Mammary epithelial cell (primary cell): ENCODE measurements at regions of chr1 and their contacts with region 1.

Region 1: GRCh38 chr1:31789259-31790065 is 25.3 kb upstream of the ADGRB2 start:
- DNase-seq: peak; percentile 75
- H3K4me3 ChIP-seq: peak overlapping the region; percentile 52 to 66 (median 60)
- H3K27ac ChIP-seq: no peak overlapping the region
- H3K4me1 ChIP-seq: peaks cover 13% of the 10 kb centered on the region
- H3K27me3 ChIP-seq: no peaks in the 10 kb centered on the region
- CTCF ChIP-seq: peak; percentile 79 to 98

Region 2: DNA sequence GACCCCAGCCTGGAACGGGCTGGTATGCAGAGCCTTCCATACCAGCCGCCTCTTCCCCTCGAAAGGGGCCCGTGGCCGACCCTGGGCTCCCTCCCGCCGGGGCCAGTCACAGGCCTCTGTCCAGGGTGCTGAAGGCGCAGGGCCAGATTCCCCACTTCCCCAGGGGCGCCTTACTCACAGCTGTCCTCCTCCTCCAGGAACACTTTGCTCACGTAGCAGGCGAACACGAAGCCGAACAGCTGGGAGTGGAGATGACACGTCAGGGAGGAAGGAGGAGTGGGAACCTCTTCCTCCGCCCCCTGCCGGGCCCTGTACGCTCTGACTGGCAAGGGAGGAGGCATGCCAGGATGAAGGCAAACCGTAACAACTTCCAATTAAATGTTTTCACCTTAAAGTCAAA is 607.1 kb before region 1 on chr1:
- CTCF ChIA-PET with region 1: interaction called, 7 read pairs
- dilution Hi-C with region 1: no loop called
- in situ Hi-C with region 1: no loop called
- intact Hi-C with region 1: loop called (anchors 2 kb)
- DNase-seq: peak; percentile 96
- H3K4me3 ChIP-seq: peak overlapping the region in 1 of 3 experiments; percentile 31
- H3K27ac ChIP-seq: no peak overlapping the region
- H3K4me1 ChIP-seq: peaks cover 13% of the 10 kb centered on the region
- H3K27me3 ChIP-seq: no peaks in the 10 kb centered on the region
- CTCF ChIP-seq: peak; percentile 16 to 57

Region 3: DNA sequence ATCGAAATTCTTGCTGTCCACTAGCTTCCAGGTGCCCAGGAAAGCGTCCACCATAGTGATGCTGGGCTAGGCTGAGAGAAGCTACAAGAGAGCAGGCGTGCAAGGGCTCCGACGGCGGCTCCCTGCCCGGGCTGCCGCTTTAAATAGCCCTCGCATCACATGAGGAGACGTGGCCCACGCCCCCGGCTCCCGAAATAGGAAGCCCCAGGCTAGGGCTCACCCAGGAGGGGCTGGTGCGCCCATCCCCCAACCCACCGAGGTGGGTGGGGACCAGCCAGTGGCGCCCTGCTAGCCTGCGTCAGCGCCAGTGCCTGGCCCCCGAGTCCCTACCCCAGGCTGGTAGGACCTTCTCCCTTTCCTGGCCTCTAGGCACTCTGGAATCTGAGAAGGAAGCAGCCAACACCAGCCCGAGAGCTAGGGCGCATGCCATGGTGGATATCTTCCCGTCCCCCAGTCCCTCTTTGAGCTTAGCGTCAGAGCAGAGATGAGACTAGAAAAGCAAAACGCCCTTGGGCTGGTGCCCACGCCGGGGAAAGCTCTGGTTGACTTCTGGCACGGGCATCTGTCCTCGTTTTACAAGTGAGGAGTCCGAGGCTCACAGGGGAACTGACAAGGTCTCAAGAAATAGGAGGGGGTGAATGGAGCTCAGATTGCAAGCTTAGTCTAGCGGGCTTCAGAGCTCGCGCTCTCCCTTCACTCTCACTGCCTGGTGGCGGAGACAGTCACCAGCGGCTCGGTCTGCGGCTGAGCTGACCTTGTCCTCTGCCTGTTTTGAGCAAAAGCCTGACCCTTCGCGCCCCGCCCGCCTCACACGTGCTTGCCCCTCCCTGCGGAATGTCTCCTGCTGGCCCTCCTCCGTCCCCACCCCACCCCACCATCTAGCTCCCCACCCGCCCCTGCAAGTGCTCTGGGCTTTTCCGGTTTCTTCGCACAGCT is 416.2 kb before region 1 on chr1 and contains the start of gene FABP3:
- CTCF ChIA-PET with region 1: no interaction called
- dilution Hi-C with region 1: no loop called
- in situ Hi-C with region 1: no loop called
- intact Hi-C with region 1: no loop called
- DNase-seq: no peak
- H3K4me3 ChIP-seq: peak within 1 kb of the TSS in 2 of 3 experiments; percentile 2 to 17
- H3K27ac ChIP-seq: no peak within 1 kb of the TSS
- H3K4me1 ChIP-seq: peaks cover 11% of the 10 kb centered on the region
- H3K27me3 ChIP-seq: no peaks in the 10 kb centered on the region
- CTCF ChIP-seq: no peak
- total RNA-seq, gene FABP3: 0.33 TPM in 1 of 2 donors, not detected in the other

Region 4: GRCh38 chr1:31434171-31434871 is 355.1 kb before region 1 on chr1:
- CTCF ChIA-PET with region 1: no interaction called
- dilution Hi-C with region 1: no loop called
- in situ Hi-C with region 1: loop called in 1 of 2 experiments (anchors 25 kb)
- intact Hi-C with region 1: no loop called
- DNase-seq: no peak
- H3K4me3 ChIP-seq: no peak overlapping the region
- H3K27ac ChIP-seq: no peak overlapping the region
- H3K4me1 ChIP-seq: peaks cover 30% of the 10 kb centered on the region
- H3K27me3 ChIP-seq: no peaks in the 10 kb centered on the region
- CTCF ChIP-seq: no peak

Region 5: GRCh38 chr1:31505911-31506497 is 283.5 kb before region 1 on chr1:
- CTCF ChIA-PET with region 1: no interaction called
- dilution Hi-C with region 1: no loop called
- in situ Hi-C with region 1: no loop called
- intact Hi-C with region 1: no loop called
- DNase-seq: peak; percentile 45
- H3K4me3 ChIP-seq: no peak overlapping the region
- H3K27ac ChIP-seq: no peak overlapping the region
- H3K4me1 ChIP-seq: peaks cover 4% of the 10 kb centered on the region
- H3K27me3 ChIP-seq: peaks cover 3% of the 10 kb centered on the region
- CTCF ChIP-seq: no peak

Region 6: DNA sequence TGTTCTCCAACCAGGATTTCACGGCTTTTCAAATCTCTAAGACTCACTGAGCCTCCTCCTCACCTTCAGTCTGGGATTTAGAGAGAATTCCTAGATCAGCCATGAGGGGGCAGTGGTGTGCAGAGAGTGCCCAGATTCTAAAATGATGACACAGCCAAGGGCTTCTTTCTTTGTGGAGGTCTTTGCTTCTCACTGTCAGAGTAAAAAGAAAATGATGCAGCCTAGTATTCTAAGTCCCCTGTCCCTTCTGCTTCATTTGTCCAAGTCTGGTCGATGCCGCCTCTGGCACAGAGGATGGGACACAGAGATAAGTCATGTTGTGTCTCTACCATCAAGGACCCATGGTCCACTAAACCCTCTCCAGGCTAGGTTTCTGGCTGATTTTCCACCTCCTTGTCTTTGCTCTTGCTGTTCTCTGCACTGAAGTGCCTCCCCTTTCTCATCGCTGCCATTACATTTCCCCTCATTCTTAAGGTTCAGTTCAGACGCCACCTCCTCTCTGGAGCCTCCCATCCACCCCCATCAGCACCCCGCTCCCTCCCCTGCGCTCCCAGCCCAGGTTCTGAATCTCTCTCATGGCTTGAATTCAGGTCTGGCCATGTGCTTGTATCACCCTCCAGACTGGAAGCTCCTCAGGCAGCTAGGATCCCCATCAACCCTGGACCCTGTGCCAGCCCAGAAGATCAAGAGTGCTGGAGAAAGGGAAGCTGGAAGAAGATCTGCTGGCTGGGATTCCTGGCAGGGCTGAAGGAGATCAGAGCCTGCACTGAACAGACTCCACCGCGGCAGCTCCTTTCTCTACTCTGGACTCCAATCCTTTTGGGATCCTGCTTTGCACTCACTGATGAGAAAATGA is 225.1 kb before region 1 on chr1:
- CTCF ChIA-PET with region 1: no interaction called
- dilution Hi-C with region 1: no loop called
- in situ Hi-C with region 1: loop called in 1 of 2 experiments (anchors 25 kb)
- intact Hi-C with region 1: loop called (anchors 1 kb)
- DNase-seq: peak; percentile 52
- H3K4me3 ChIP-seq: no peak overlapping the region
- H3K27ac ChIP-seq: no peak overlapping the region
- H3K4me1 ChIP-seq: peaks cover 26% of the 10 kb centered on the region
- H3K27me3 ChIP-seq: no peaks in the 10 kb centered on the region
- CTCF ChIP-seq: peak; percentile 79 to 84

Region 7: GRCh38 chr1:31663622-31664452 is 125.6 kb before region 1 on chr1:
- CTCF ChIA-PET with region 1: interaction called, 6 read pairs
- dilution Hi-C with region 1: no loop called
- in situ Hi-C with region 1: no loop called
- intact Hi-C with region 1: loop called (anchors 1 kb)
- DNase-seq: no peak
- H3K4me3 ChIP-seq: no peak overlapping the region
- H3K27ac ChIP-seq: no peak overlapping the region
- H3K4me1 ChIP-seq: peaks cover 23% of the 10 kb centered on the region
- H3K27me3 ChIP-seq: no peaks in the 10 kb centered on the region
- CTCF ChIP-seq: peak; percentile 75 to 77

Region 8: GRCh38 chr1:31723828-31724359 is 65.6 kb before region 1 on chr1:
- CTCF ChIA-PET with region 1: no interaction called
- dilution Hi-C with region 1: no loop called
- in situ Hi-C with region 1: no loop called
- intact Hi-C with region 1: no loop called
- DNase-seq: peak; percentile 84
- H3K4me3 ChIP-seq: no peak overlapping the region
- H3K27ac ChIP-seq: no peak overlapping the region
- H3K4me1 ChIP-seq: no peaks in the 10 kb centered on the region
- H3K27me3 ChIP-seq: no peaks in the 10 kb centered on the region
- CTCF ChIP-seq: no peak

Region 9: DNA sequence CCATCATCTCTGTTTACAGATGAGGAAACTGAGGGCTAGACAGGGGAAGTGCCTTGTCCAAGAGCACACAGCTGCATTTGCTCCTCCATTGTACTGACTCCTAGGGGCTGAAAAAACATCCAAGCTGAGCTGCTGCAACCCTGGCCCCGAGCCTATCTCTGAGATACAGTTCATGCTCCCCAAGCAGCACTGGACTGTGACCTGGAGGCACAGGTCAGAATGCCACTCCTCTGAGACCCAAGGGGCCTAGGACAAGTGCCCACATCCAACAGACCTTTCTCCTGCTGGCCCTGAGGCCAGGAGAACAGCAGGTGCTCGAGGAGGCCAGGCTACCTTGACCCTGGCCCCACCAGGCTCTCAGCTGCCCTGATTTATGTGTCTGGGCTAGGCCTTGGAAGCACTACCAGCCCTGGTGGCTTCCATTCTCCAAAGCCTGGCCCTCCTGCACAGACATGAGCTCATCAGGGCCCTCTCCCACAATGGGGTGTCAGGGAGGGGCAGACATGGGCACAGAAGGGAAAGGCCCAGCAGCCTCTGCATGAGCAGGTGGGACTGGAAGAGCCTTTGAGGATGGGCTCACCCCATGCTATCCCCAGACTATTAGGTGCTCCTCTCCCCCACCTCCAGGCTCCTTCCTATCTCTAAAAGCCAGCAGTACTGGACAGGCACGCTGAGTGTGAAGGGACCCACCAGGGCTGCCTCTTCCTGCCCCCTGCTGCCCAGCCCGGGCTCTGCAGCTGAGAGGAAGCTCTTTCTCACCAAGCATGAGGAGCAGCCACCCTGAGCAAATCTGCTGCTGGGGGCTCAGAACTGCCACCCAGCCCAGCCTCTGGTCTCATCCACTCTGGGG is 44.1 kb before region 1 on chr1:
- CTCF ChIA-PET with region 1: interaction called, 3 read pairs
- dilution Hi-C with region 1: no loop called
- in situ Hi-C with region 1: no loop called
- intact Hi-C with region 1: loop called (anchors 1 kb)
- DNase-seq: peak; percentile 49
- H3K4me3 ChIP-seq: no peak overlapping the region
- H3K27ac ChIP-seq: no peak overlapping the region
- H3K4me1 ChIP-seq: no peaks in the 10 kb centered on the region
- H3K27me3 ChIP-seq: no peaks in the 10 kb centered on the region
- CTCF ChIP-seq: peak; percentile 82 to 93

Region 10: DNA sequence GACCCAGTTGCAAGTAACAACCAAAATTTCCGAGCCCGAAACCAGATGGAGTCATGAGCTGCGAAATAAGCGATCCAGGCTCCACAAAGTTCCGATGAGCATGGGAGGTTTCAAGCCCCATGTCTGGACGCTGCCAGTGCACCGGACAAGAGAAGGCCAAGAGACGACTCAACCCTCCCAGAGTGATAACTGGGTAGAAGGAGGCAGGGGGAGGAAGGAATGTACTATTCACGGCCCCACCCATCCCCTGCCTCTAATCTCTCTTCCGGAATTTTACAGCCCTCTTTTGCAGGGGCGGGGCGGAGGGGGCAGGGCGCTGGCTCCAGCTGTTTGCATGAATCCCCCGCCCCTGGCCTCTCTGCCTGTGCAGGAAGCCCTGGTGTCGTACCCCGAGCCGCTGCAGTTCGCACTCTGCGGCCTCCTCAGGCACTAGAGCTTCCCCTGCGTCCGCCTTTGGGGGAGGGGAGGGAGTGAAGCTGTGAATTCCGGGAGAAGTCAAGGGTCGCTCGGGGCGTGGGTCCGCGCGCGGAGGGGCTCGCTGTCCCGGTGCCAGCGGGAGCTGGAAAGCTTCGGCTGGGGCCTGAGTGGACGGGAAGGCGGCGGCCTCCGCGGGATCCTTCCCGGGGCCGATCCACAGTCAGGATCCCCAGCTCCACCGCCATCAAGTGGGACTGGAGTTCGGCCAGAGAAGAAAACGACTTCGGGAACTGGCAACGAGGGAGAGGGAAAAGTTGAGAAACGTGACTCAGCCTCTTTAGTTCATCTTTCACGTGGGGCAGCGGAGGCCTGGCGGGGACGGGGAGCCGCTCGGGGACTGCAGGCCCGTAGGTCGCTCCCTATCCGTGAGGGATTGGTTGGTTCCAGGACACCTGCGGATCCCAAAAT is 155.0 kb after region 1 on chr1:
- CTCF ChIA-PET with region 1: no interaction called
- dilution Hi-C with region 1: no loop called
- in situ Hi-C with region 1: no loop called
- intact Hi-C with region 1: no loop called
- DNase-seq: no peak
- H3K4me3 ChIP-seq: no peak overlapping the region
- H3K27ac ChIP-seq: no peak overlapping the region
- H3K4me1 ChIP-seq: peaks cover 16% of the 10 kb centered on the region
- H3K27me3 ChIP-seq: no peaks in the 10 kb centered on the region
- CTCF ChIP-seq: no peak